PC-9 (cell line): ENCODE measurements at regions of chr2 and their contacts with region 1.

Region 1: GRCh38 chr2:224938651-224939182 is 103.6 kb downstream of the DOCK10 start:
- DNase-seq: no peak
- H3K4me3 ChIP-seq: no peak overlapping the region
- H3K27ac ChIP-seq: no peak overlapping the region
- H3K4me1 ChIP-seq: no peaks in the 10 kb centered on the region
- H3K27me3 ChIP-seq: no peaks in the 10 kb centered on the region
- CTCF ChIP-seq: no peak

Region 2: GRCh38 chr2:224958873-224959272 is 20.2 kb after region 1 on chr2:
- CTCF ChIA-PET with region 1: interaction called, 22 read pairs
- POLR2A ChIA-PET with region 1: no interaction called
- intact Hi-C with region 1: no loop called
- DNase-seq: no peak
- H3K4me3 ChIP-seq: no peak overlapping the region
- H3K27ac ChIP-seq: no peak overlapping the region
- H3K4me1 ChIP-seq: no peaks in the 10 kb centered on the region
- H3K27me3 ChIP-seq: no peaks in the 10 kb centered on the region
- CTCF ChIP-seq: no peak

Region 3: DNA sequence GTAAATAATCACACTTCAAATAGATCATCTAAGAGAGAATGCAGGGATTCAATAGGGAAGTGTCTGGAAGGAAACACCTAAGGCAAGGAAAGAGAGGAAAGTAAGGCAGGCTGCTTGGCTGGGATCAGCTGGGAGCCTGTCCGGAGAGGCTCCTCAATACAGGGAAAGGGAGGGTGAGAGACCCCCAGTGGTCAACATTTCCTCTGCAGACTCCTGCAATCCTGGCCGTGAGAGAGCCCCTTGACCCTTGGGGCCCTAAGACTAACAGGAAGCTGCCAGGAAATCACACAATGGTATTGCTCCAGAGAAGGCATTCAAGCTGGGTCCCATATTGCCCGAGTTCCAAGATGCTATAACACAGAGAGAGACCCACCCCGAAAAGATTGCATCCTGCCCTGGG is 1010.2 kb after region 1 on chr2:
- CTCF ChIA-PET with region 1: no interaction called
- POLR2A ChIA-PET with region 1: no interaction called
- intact Hi-C with region 1: no loop called
- DNase-seq: no peak
- H3K4me3 ChIP-seq: no peak overlapping the region
- H3K27ac ChIP-seq: no peak overlapping the region
- H3K4me1 ChIP-seq: no peaks in the 10 kb centered on the region
- H3K27me3 ChIP-seq: no peaks in the 10 kb centered on the region
- CTCF ChIP-seq: no peak